ENCODE measurements at regions of chr12 and their contacts with region 1.

Region 1: GRCh38 chr12:118135788-118136558 is at the start of gene PEBP1:
- DNase-seq: peak; percentile 97
- H3K4me3 Mint-ChIP-seq: peak within 1 kb of the TSS; percentile 91
- H3K27ac Mint-ChIP-seq: peak within 1 kb of the TSS; percentile 74
- H3K4me1 Mint-ChIP-seq: peaks cover 27% of the 10 kb centered on the region
- H3K27me3 Mint-ChIP-seq: no peaks in the 10 kb centered on the region
- total RNA-seq, gene PEBP1: 128 to 132 TPM

Region 2: GRCh38 chr12:117994551-117995438 is 141.2 kb before region 1 on chr12:
- CTCF ChIA-PET with region 1: no interaction called
- POLR2A ChIA-PET with region 1: no interaction called
- intact Hi-C with region 1: no loop called
- DNase-seq: peak; percentile 16
- H3K4me3 Mint-ChIP-seq: no peak overlapping the region
- H3K27ac Mint-ChIP-seq: no peak overlapping the region
- H3K4me1 Mint-ChIP-seq: peaks cover 11% of the 10 kb centered on the region
- H3K27me3 Mint-ChIP-seq: peaks cover 4% of the 10 kb centered on the region

Region 3: GRCh38 chr12:118120579-118121363 is 15.2 kb before region 1 on chr12:
- CTCF ChIA-PET with region 1: interaction called, 11 read pairs
- POLR2A ChIA-PET with region 1: interaction called, 5 read pairs
- intact Hi-C with region 1: loop called (anchors 2 kb)
- DNase-seq: peak; percentile 81
- H3K4me3 Mint-ChIP-seq: no peak overlapping the region
- H3K27ac Mint-ChIP-seq: peak overlapping the region; percentile 20
- H3K4me1 Mint-ChIP-seq: peaks cover 11% of the 10 kb centered on the region
- H3K27me3 Mint-ChIP-seq: no peaks in the 10 kb centered on the region

Region 4: GRCh38 chr12:118164798-118165486 is 29.0 kb after region 1 on chr12:
- CTCF ChIA-PET with region 1: interaction called, 4 read pairs
- POLR2A ChIA-PET with region 1: interaction called, 3 read pairs
- intact Hi-C with region 1: loop called (anchors 2 kb)
- DNase-seq: peak; percentile 33
- H3K4me3 Mint-ChIP-seq: no peak overlapping the region
- H3K27ac Mint-ChIP-seq: peak overlapping the region; percentile 30
- H3K4me1 Mint-ChIP-seq: peaks cover 37% of the 10 kb centered on the region
- H3K27me3 Mint-ChIP-seq: no peaks in the 10 kb centered on the region

Region 5: DNA sequence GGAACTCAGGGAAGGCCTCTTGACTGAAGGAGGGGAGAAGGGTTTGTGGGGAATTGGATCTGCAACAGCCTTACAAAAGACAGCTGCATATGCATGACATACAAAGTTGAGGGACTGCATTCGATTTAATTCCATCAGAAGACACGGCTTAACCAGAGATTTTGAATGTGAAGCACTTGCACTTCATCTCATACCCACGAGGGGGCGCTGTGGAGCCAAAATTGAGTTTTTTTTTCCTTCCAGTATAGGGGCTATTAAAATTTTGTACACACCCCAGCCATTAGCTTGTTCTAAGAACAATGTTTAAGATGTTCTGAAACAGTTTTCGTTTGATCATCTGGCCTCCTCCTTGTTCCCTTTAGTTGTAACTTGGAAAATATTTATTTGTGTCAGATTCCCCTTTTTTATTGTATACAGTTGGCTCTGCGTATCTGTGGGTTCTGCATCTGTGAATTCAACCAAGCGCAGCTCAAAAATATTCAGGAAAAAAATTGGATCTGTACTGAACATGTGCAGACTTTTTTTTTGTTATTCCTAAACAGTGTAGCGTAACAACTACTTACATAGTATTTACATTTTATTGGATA is 242.0 kb after region 1 on chr12:
- CTCF ChIA-PET with region 1: interaction called, 31 read pairs
- POLR2A ChIA-PET with region 1: interaction called, 14 read pairs
- intact Hi-C with region 1: loop called (anchors 1 kb)
- DNase-seq: peak; percentile 84
- H3K4me3 Mint-ChIP-seq: peak overlapping the region; percentile 90
- H3K27ac Mint-ChIP-seq: peak overlapping the region; percentile 87
- H3K4me1 Mint-ChIP-seq: peaks cover 33% of the 10 kb centered on the region
- H3K27me3 Mint-ChIP-seq: no peaks in the 10 kb centered on the region

Measured in activated CD4-positive, alpha-beta memory T cell treated with anti-CD3 and anti-CD28 coated beads for 36 hours (primary cell).